ENCODE measurements at regions of chr16 and their contacts with region 1.

Region 1: GRCh38 chr16:46830902-46831647 is at the start of gene C16orf87:
- DNase-seq: peak; percentile 97
- ATAC-seq: peak; percentile 92
- H3K4me3 ChIP-seq: peak within 1 kb of the TSS; percentile 75 to 88 (median 82)
- H3K4me3 Mint-ChIP-seq: peak within 1 kb of the TSS; percentile 95
- H3K27ac ChIP-seq: peak within 1 kb of the TSS; percentile 55 to 85
- H3K27ac Mint-ChIP-seq: peak within 1 kb of the TSS; percentile 93
- H3K4me1 ChIP-seq: peaks cover 34 to 47% of the 10 kb centered on the region in 2 donors
- H3K4me1 Mint-ChIP-seq: peaks cover 59% of the 10 kb centered on the region
- H3K27me3 ChIP-seq: no peaks in the 10 kb centered on the region
- H3K27me3 Mint-ChIP-seq: no peaks in the 10 kb centered on the region
- CTCF ChIP-seq: no peak
- total RNA-seq, gene C16orf87: 11.3 and 12.5 TPM in 2 replicates

Region 2: DNA sequence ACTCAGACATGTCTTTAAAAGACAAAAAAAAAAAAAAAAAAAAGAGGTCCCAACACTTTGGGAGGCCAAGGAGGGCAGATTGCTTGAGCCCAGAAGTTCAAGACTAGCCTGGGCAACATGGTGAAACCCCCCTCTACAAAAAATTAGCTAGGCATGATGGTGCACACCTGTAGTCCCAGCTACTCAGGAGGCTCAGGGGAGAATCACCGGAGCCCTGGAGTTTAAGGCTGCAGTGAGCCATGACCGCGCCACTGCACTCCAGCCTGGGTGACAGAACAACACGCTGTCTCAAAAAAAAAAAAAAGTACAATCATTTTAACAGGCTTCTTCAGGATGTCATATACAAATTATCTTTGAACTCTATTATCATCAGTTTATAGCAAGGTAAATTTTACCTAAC is 22.1 kb before region 1 on chr16:
- CTCF ChIA-PET with region 1: no interaction called
- POLR2A ChIA-PET with region 1: interaction called, 6 read pairs
- intact Hi-C with region 1: loop called (anchors 2 kb)
- DNase-seq: peak; percentile 54
- ATAC-seq: peak; percentile 75
- H3K4me3 ChIP-seq: peak overlapping the region in 1 of 5 experiments; percentile 25
- H3K4me3 Mint-ChIP-seq: no peak overlapping the region
- H3K27ac ChIP-seq: no peak overlapping the region
- H3K27ac Mint-ChIP-seq: no peak overlapping the region
- H3K4me1 ChIP-seq: peaks cover 17 to 20% of the 10 kb centered on the region in 2 donors
- H3K4me1 Mint-ChIP-seq: peaks cover 24% of the 10 kb centered on the region
- H3K27me3 ChIP-seq: no peaks in the 10 kb centered on the region
- H3K27me3 Mint-ChIP-seq: no peaks in the 10 kb centered on the region
- CTCF ChIP-seq: no peak

Region 3: GRCh38 chr16:46918861-46919792 is 88.1 kb after region 1 on chr16:
- CTCF ChIA-PET with region 1: interaction called, 5 read pairs
- POLR2A ChIA-PET with region 1: no interaction called
- intact Hi-C with region 1: loop called (anchors 10 kb)
- DNase-seq: peak; percentile 79
- ATAC-seq: peak; percentile 62
- H3K4me3 ChIP-seq: peak overlapping the region in 3 of 5 experiments; percentile 11 to 53 (median 33)
- H3K4me3 Mint-ChIP-seq: peak overlapping the region; percentile 75
- H3K27ac ChIP-seq: peak overlapping the region; percentile 23 to 54
- H3K27ac Mint-ChIP-seq: peak overlapping the region; percentile 85
- H3K4me1 ChIP-seq: peaks cover 45 to 68% of the 10 kb centered on the region in 2 donors
- H3K4me1 Mint-ChIP-seq: peaks cover 67% of the 10 kb centered on the region
- H3K27me3 ChIP-seq: no peaks in the 10 kb centered on the region
- H3K27me3 Mint-ChIP-seq: no peaks in the 10 kb centered on the region
- CTCF ChIP-seq: peak; percentile 47

Region 4: DNA sequence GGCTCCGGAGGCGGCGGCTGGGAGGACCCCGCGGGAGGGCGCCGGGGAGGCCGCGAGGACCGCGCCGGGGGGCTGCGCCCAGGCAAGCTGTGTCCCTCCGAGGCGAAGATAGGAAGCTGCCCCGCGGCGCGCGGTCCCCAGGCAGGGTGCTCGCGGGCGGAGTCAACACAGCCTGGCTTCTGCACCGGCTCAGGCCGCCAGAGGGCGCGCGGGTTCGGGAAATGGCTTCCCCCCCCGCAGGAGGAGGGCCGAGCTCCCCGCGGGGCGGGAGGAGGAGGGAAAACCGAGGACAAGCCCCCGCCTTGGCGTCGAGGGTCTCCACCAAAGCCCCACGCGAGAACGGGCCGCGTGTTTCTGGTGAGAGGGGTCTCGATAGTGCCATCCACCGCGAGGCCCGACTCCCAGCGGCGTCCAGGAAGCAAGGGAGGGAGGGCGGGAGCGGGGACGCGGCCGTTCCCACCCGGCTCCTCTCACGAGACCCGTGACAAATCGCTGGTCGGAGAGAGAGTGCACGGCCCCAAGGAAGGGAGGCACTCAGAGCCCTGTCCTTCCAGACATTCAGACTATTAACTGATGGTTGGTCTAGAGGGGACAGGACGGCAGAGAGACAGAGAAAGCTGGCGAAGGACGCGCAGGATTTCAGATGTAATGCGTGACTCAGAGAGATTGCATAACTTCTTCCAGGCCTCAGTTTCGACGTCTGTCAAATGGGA is 206.8 kb after region 1 on chr16:
- CTCF ChIA-PET with region 1: interaction called, 3 read pairs
- POLR2A ChIA-PET with region 1: no interaction called
- intact Hi-C with region 1: loop called (anchors 5 kb)
- DNase-seq: peak; percentile 90
- ATAC-seq: peak; percentile 98
- H3K4me3 ChIP-seq: peak overlapping the region; percentile 53 to 90 (median 63)
- H3K4me3 Mint-ChIP-seq: peak overlapping the region; percentile 90
- H3K27ac ChIP-seq: peak overlapping the region in 1 of 2 donors; percentile 52
- H3K27ac Mint-ChIP-seq: peak overlapping the region; percentile 68
- H3K4me1 ChIP-seq: peaks cover 3 to 26% of the 10 kb centered on the region in 2 donors
- H3K4me1 Mint-ChIP-seq: peaks cover 25% of the 10 kb centered on the region
- H3K27me3 ChIP-seq: no peaks in the 10 kb centered on the region
- H3K27me3 Mint-ChIP-seq: no peaks in the 10 kb centered on the region
- CTCF ChIP-seq: peak; percentile 95